Naive thymus-derived CD8-positive, alpha-beta T cell (primary cell): ENCODE measurements at regions of chr2 and their contacts with region 1.

Region 1: GRCh38 chr2:197239434-197239833 is 71.1 kb downstream of the ANKRD44 start:
- DNase-seq: peak in 1 of 10 donors; percentile 40
- ATAC-seq: peak in 1 of 2 donors; percentile 22
- H3K4me3 Mint-ChIP-seq: peak overlapping the region; percentile 73 to 90 (median 86)
- H3K27ac Mint-ChIP-seq: peak overlapping the region; percentile 77 to 100 (median 94)
- H3K4me1 Mint-ChIP-seq: peaks cover 49 to 96% (median 84%) of the 10 kb centered on the region in 4 donors
- H3K27me3 Mint-ChIP-seq: no peaks in the 10 kb centered on the region

Region 2: DNA sequence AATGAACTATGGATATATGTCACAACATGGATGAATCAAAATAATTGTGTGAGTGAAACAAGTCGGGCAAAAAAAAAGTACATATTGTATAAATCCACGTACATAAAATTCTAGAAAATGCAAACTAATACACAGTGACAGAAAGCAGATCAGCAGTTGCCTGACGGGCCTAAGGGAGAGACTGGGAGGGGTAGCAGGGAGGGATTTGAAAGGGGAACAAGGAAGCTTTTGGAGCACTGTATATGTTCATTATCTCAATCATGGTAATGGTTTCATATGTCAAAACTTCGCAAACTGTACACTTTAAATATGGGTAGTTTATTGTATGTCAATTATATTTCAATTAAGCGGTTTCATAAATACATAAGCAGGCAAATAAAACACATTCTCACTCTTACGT is 82.7 kb before region 1 on chr2:
- POLR2A ChIA-PET with region 1: no interaction called
- DNase-seq: no peak
- ATAC-seq: no peak
- H3K4me3 Mint-ChIP-seq: peak overlapping the region in 1 of 10 donors; percentile 21
- H3K27ac Mint-ChIP-seq: peak overlapping the region; percentile 25 to 100 (median 73)
- H3K4me1 Mint-ChIP-seq: peaks cover 38 to 92% (median 79%) of the 10 kb centered on the region in 4 donors
- H3K27me3 Mint-ChIP-seq: no peaks in the 10 kb centered on the region

Region 3: DNA sequence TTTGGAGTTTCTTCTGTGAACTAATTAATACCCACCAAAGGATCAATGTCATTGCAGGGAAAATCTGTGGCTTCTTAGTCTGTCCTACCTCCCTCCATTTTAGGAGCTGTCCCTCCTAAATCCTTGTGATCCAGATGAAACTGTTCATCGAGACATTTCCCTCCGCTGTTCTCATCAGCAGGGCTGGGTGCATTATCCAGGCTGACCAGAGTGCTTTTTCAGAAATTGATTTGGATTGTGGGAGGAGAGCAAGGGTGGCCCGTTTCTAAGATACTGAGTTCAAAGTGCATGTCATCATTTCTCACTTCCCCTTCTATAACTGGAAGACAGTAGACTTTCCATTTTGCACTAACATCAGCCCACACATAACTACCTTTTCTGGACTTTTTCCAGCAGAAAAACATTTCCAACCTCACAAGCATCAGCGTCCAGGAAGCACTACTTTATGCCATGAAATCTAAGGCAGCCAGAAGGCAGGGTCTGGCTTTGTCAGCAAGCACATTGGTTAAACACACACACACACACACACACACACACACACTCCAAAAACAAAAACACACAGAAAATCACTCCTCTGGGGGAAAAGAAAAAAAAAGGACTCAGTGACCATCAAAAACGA is 23.0 kb before region 1 on chr2:
- POLR2A ChIA-PET with region 1: interaction called, 259 read pairs
- DNase-seq: no peak
- ATAC-seq: peak in 1 of 2 donors; percentile 38
- H3K4me3 Mint-ChIP-seq: peak overlapping the region; percentile 29 to 87 (median 72)
- H3K27ac Mint-ChIP-seq: peak overlapping the region; percentile 91 to 99 (median 97)
- H3K4me1 Mint-ChIP-seq: peaks cover 37 to 94% (median 88%) of the 10 kb centered on the region in 4 donors
- H3K27me3 Mint-ChIP-seq: no peaks in the 10 kb centered on the region

Region 4: DNA sequence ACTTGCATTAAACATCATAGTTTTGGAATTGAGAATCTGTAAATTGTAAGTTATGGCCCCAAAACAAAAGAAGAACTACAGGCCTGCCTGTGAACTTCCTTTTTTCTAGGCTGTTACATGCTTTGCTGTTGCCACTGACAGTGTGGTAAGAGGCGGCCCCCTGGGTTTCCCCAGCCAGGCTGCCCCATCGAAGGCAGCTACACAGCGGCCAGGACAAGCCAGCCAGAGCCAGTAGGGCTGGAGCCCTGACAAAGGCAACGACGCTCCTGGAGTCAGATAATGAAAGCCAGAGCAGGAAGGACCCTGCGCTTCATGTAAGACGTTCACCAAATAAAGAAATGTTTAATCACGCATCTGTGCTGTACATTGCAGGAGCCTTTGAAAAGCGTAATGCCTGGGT is 16.1 kb after region 1 on chr2:
- POLR2A ChIA-PET with region 1: interaction called, 18 read pairs
- DNase-seq: peak; percentile 51 to 83 (median 68)
- ATAC-seq: peak; percentile 84 to 94
- H3K4me3 Mint-ChIP-seq: peak overlapping the region; percentile 70 to 86 (median 79)
- H3K27ac Mint-ChIP-seq: peak overlapping the region; percentile 90 to 100 (median 96)
- H3K4me1 Mint-ChIP-seq: peaks cover 37 to 85% (median 78%) of the 10 kb centered on the region in 4 donors
- H3K27me3 Mint-ChIP-seq: no peaks in the 10 kb centered on the region

Region 5: DNA sequence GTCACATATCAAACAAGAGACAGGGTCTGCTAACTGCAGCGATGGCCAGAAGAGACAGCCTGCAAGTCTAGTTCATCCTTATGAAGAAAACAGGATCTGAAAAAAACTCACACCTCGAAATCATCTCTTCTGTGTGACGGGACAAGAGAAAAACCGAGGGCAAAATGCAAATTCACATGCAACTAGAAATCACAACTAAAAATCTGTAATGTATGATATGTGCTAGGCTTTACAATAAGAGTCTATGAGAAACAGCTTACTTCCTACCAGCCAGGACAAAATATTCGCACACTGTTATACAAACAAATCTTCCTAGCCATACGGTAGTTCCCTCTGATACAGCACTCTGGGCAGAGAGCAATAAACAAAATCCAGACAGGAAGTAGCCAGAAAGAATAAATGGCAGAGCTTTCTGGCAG is 22.4 kb after region 1 on chr2:
- POLR2A ChIA-PET with region 1: interaction called, 12 read pairs
- DNase-seq: no peak
- ATAC-seq: peak; percentile 23 to 42
- H3K4me3 Mint-ChIP-seq: peak overlapping the region; percentile 31 to 76 (median 67)
- H3K27ac Mint-ChIP-seq: peak overlapping the region; percentile 85 to 99 (median 94)
- H3K4me1 Mint-ChIP-seq: peaks cover 40 to 87% (median 84%) of the 10 kb centered on the region in 4 donors
- H3K27me3 Mint-ChIP-seq: no peaks in the 10 kb centered on the region